ENCODE measurements at regions of chr22 and their contacts with region 1.

Region 1: GRCh38 chr22:46122511-46122971 is 27.8 kb upstream of the PPARA start:
- DNase-seq: peak; percentile 75
- ATAC-seq: peak; percentile 76
- H3K4me3 Mint-ChIP-seq: no peak overlapping the region
- H3K27ac Mint-ChIP-seq: no peak overlapping the region
- H3K4me1 Mint-ChIP-seq: peaks cover 3% of the 10 kb centered on the region
- H3K27me3 Mint-ChIP-seq: no peaks in the 10 kb centered on the region

Region 2: DNA sequence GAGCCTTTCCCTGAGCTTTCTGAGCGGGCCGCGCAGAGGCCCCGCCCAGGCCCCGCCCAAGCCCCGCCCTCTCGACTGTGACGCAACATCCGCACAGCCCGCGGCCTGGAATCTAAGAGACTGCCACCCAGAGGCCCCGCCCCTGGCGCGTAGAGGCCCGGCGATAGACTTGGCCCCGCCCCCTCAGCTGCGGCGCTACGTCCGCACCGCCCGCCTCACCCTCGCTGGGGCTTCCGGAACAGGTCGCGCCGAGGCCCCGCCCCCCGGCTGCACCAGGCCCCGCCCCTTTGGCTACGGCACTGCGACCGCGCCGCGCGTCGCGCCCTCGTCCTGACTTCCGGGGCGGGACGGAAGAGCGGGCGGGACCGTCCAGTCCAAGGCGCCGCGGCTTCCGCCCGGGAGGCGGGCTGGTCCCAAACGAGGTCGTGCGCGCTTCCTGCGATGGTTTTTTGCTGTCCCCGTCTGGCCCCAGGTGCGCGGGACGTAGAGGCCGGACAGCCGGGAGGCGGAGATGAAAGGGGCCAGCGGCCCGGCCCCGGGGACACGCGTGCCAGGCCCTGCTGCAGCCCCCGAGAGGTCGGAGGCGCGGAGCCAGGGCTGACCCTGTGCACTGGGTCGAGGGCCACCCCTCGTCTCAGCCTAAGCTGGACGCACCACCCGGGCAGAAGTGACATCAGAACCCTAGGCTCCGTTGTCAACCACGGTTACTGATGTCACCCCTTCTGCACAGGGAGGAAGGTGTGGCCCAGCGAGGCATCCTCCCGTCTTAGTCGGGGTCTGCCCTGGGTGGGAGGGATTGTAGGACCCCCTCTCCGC is 86.6 kb before region 1 on chr22:
- CTCF ChIA-PET with region 1: interaction called, 10 read pairs
- DNase-seq: peak; percentile 100
- ATAC-seq: peak; percentile 93
- H3K4me3 Mint-ChIP-seq: peak overlapping the region; percentile 76
- H3K27ac Mint-ChIP-seq: peak overlapping the region; percentile 90
- H3K4me1 Mint-ChIP-seq: peaks cover 13% of the 10 kb centered on the region
- H3K27me3 Mint-ChIP-seq: no peaks in the 10 kb centered on the region

Region 3: DNA sequence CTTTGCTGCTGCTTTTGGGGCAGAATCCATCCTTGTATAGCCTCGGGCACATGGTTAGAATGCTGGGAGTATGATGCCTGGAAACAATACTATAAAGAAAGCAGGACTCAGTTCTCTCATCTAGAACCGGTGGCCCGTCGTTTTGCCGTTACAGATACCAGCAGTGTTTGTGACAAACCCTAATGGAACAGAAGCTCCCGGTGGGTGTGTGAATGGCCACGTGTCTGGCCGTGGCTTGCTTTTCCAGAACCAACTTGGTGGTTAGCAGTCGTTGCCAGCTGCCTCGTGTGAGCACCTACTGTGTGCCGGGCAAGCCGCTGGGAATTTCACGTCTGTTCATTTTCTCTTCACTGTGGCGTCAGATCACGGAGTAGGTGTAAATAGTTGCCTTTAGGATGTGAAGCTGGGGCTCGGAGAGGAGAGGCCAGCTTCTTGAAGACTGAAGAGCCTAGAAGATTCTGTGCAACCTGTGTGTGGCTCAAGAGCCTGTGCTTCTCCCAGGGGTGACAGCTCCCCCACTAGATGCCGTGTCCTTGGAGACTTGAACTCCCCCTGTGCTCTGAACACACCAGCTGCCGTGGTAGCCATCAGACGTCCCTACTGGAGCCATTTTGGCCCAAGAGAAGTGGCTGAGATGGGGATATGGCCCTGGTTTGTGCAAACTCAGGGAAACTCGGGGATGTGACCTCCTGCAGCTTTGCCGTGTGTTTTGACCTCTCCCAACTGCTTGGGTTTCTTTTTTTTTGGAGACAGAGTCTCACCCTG is 29.7 kb before region 1 on chr22:
- CTCF ChIA-PET with region 1: no interaction called
- DNase-seq: no peak
- ATAC-seq: no peak
- H3K4me3 Mint-ChIP-seq: no peak overlapping the region
- H3K27ac Mint-ChIP-seq: no peak overlapping the region
- H3K4me1 Mint-ChIP-seq: peaks cover 8% of the 10 kb centered on the region
- H3K27me3 Mint-ChIP-seq: no peaks in the 10 kb centered on the region

Region 4: GRCh38 chr22:46296257-46297150 is 174.0 kb after region 1 on chr22 and contains the start of gene GTSE1:
- CTCF ChIA-PET with region 1: interaction called, 19 read pairs
- DNase-seq: peak; percentile 99
- ATAC-seq: peak; percentile 98
- H3K4me3 Mint-ChIP-seq: peak within 1 kb of the TSS; percentile 95
- H3K27ac Mint-ChIP-seq: peak within 1 kb of the TSS; percentile 97
- H3K4me1 Mint-ChIP-seq: peaks cover 70% of the 10 kb centered on the region
- H3K27me3 Mint-ChIP-seq: no peaks in the 10 kb centered on the region
- total RNA-seq, gene GTSE1: 91.9 to 101 TPM

Region 5: DNA sequence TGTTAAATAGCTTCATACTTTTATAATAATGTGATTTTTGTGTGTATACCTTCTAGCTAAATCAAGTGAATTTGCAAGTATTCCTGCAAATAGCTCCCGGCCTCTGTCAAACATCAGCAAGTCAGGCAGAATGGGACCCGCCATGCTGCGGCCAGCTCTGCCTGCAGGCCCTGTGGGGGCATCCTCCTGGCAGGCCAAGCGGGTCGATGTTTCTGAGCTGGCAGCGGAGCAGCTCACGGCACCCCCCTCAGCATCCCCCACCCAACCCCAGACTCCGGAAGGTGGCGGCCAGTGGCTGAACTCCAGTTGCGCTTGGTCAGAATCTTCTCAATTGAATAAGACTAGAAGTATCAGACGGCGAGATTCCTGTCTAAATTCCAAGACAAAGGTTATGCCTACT is 193.4 kb after region 1 on chr22:
- CTCF ChIA-PET with region 1: interaction called, 21 read pairs
- DNase-seq: no peak
- ATAC-seq: no peak
- H3K4me3 Mint-ChIP-seq: no peak overlapping the region
- H3K27ac Mint-ChIP-seq: no peak overlapping the region
- H3K4me1 Mint-ChIP-seq: no peaks in the 10 kb centered on the region
- H3K27me3 Mint-ChIP-seq: no peaks in the 10 kb centered on the region

Region 6: DNA sequence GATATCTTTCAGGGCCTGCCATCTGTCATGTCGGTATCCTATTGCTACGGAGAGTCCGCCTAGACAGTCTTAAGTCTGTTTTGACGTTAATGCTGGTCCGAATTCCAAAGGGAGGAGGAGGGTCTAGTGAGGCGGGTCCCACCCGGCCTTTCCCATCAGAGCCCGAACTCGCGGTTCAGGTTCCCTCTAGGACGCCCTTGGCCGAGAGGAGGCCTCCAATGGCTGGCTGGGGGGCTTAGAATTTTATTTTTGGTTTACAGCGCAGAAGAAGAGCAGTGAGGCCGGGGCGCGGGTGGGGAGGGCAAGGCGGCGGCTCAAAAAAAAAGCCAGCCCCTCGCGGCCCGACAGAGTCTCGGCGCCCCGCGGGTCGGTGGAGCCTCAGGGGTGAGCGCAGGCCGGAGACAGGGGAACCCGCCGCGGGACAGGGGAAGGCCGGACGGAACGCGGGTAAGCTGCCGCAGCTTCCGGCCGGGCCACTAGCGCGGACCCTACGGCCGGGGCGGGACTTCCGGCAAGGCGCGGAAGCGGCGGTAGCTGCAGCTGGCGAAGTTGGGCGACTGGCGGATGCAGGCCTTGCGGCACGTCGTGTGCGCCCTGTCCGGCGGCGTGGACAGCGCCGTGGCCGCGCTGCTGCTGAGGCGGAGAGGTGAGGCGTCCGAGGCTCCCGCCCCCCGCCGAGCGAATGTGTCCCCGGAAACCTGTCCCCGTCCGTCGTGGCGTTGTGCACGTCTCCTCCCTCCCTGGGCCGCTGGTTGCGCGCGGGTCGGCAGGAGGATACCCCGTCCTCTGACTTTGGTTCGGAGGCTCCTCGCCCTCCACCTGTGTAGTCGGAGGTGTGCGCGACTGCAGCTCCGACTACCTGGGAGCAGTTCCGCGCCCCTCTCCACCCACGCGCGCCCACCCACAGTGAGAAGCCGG is 212.9 kb after region 1 on chr22 and contains the start of gene TRMU:
- CTCF ChIA-PET with region 1: interaction called, 12 read pairs
- DNase-seq: peak; percentile 83
- ATAC-seq: peak; percentile 93
- H3K4me3 Mint-ChIP-seq: peak within 1 kb of the TSS; percentile 96
- H3K27ac Mint-ChIP-seq: peak within 1 kb of the TSS; percentile 87
- H3K4me1 Mint-ChIP-seq: peaks cover 26% of the 10 kb centered on the region
- H3K27me3 Mint-ChIP-seq: no peaks in the 10 kb centered on the region
- total RNA-seq, gene TRMU: 86.7 to 89.1 TPM

Region 7: GRCh38 chr22:46542011-46542985 is 419.8 kb after region 1 on chr22:
- CTCF ChIA-PET with region 1: interaction called, 15 read pairs
- DNase-seq: peak; percentile 76
- ATAC-seq: peak; percentile 99
- H3K4me3 Mint-ChIP-seq: no peak overlapping the region
- H3K27ac Mint-ChIP-seq: no peak overlapping the region
- H3K4me1 Mint-ChIP-seq: peaks cover 4% of the 10 kb centered on the region
- H3K27me3 Mint-ChIP-seq: peaks cover 37% of the 10 kb centered on the region

Measured in activated CD8-positive, alpha-beta memory T cell treated with anti-CD3 and anti-CD28 coated beads, Interleukin-2, amount 10 ng/mL, durations not matched to agents 7 days and 5 days (primary cell).